Activated T-helper 2 cell treated with anti-CD3 and anti-CD28 coated beads, Interferon-gamma antibody, Interleukin-2, Interleukin-4, amounts not matched to agents 10 μg/mL and 5 μg/mL and 100 μg/mL, durations not matched to agents 14 hours and 24 hours and 36 hours (primary cell): ENCODE measurements at regions of chr16 and their contacts with region 1.

Region 1: GRCh38 chr16:47460711-47461597 is at the starts of genes ITFG1 and PHKB:
- DNase-seq: peak; percentile 95
- H3K4me3 Mint-ChIP-seq: peak within 1 kb of the TSS; percentile 98
- H3K27ac Mint-ChIP-seq: peak within 1 kb of the TSS; percentile 94
- H3K4me1 Mint-ChIP-seq: peaks cover 36% of the 10 kb centered on the region
- H3K27me3 Mint-ChIP-seq: no peaks in the 10 kb centered on the region
- total RNA-seq, gene ITFG1: 23.9 and 28.7 TPM in 2 replicates
- total RNA-seq, gene PHKB: 29.7 and 34.6 TPM in 2 replicates

Region 2: DNA sequence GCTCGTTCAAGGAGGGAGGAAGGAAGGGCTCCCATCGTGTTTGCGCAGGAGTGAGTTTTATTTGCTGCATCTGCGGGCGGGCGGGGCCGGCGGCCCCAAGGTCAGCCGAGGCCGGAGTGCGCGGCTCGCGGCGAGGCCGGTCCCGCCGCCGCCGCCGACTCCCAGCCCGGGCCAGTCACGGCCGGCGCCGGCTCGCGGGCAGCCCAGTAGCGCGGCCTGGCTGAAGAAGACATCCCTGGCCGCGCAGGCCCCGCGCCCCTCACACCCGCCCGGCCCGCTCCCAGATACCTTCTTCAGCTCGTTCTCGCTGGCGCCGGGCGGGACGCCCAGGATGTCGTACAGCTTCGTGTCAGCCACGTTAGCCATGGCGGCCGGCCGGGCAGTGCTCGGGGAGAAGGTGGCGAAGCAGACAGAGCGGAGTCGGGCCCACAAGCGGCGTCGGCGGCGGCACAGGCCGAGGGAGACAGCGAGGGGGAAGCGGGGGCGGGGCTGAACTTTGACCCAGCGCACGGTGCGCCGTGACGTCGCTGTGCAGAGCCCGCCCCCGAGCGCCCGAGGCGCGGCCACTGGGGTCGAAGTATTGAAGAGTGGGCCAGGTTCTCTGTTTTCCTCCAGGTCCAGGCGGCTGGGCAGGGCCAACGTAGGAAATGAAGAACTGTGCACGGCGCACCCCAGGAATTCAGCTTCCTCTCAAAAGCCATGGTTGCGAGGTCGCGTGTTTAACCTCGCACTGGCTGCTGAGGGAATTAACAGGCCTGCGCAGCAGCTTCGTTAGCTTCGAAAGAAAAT is 487.6 kb before region 1 on chr16 and contains the start of gene DNAJA2:
- intact Hi-C with region 1: loop called (anchors 5 kb)
- DNase-seq: peak; percentile 87
- H3K4me3 Mint-ChIP-seq: peak within 1 kb of the TSS; percentile 98
- H3K27ac Mint-ChIP-seq: peak within 1 kb of the TSS; percentile 96
- H3K4me1 Mint-ChIP-seq: peaks cover 45% of the 10 kb centered on the region
- H3K27me3 Mint-ChIP-seq: no peaks in the 10 kb centered on the region
- total RNA-seq, gene DNAJA2: 65.9 and 74.4 TPM in 2 replicates

Region 3: GRCh38 chr16:47481698-47482374 is 20.9 kb after region 1 on chr16:
- intact Hi-C with region 1: no loop called
- DNase-seq: no peak
- H3K4me3 Mint-ChIP-seq: no peak overlapping the region
- H3K27ac Mint-ChIP-seq: no peak overlapping the region
- H3K4me1 Mint-ChIP-seq: peaks cover 6% of the 10 kb centered on the region
- H3K27me3 Mint-ChIP-seq: no peaks in the 10 kb centered on the region

Region 4: DNA sequence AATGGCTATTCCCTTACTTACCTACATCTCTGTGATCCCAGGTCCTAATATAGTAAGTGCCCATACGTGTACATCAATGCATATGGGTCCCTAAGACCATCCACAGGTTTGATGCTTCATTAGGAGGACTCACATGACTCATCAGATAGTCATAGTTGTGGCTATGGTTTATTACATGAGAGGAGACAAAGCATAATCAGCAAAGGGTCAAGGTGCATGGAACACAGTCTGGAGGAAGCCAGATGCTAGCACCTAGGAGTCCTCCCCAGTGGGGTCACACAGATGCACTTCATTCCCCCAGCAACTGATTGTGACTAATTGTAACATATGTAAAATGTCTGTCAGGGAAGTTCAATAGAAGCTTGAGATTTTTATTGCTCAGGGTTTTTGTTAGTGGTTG is 43.0 kb after region 1 on chr16:
- intact Hi-C with region 1: no loop called
- DNase-seq: no peak
- H3K4me3 Mint-ChIP-seq: no peak overlapping the region
- H3K27ac Mint-ChIP-seq: no peak overlapping the region
- H3K4me1 Mint-ChIP-seq: no peaks in the 10 kb centered on the region
- H3K27me3 Mint-ChIP-seq: no peaks in the 10 kb centered on the region

Region 5: GRCh38 chr16:47644166-47644565 is 183.2 kb after region 1 on chr16:
- intact Hi-C with region 1: no loop called
- DNase-seq: no peak
- H3K4me3 Mint-ChIP-seq: no peak overlapping the region
- H3K27ac Mint-ChIP-seq: no peak overlapping the region
- H3K4me1 Mint-ChIP-seq: peaks cover 8% of the 10 kb centered on the region
- H3K27me3 Mint-ChIP-seq: no peaks in the 10 kb centered on the region

Region 6: GRCh38 chr16:47732523-47733111 is 271.7 kb after region 1 on chr16:
- intact Hi-C with region 1: loop called (anchors 5 kb)
- DNase-seq: no peak
- H3K4me3 Mint-ChIP-seq: no peak overlapping the region
- H3K27ac Mint-ChIP-seq: peak overlapping the region; percentile 62
- H3K4me1 Mint-ChIP-seq: peaks cover 13% of the 10 kb centered on the region
- H3K27me3 Mint-ChIP-seq: peaks cover 14% of the 10 kb centered on the region

Region 7: DNA sequence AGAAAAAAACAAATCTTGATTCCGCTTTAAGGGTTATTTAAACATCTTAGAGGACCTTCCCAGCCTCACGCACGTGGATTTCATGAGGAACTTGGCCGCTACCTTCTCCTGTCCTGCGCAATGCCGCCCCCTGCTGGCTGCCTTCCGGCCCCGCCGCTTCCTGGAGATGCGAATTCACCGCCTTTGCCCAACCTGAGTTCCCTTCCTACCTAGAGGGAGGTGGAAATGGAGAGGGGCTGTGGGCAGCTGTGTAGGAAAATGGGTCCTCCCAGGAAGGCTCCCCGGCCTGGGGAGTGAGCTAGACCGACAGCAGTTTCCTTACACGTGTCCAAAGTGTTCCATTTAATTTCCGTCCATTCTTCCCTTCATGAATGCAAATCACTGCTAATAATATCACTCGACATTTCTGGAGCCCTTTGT is 695.8 kb after region 1 on chr16:
- intact Hi-C with region 1: loop called (anchors 5 kb)
- DNase-seq: peak; percentile 60
- H3K4me3 Mint-ChIP-seq: no peak overlapping the region
- H3K27ac Mint-ChIP-seq: no peak overlapping the region
- H3K4me1 Mint-ChIP-seq: peaks cover 25% of the 10 kb centered on the region
- H3K27me3 Mint-ChIP-seq: peaks cover 38% of the 10 kb centered on the region